HCT116 (cell line): ENCODE measurements at regions of chr20 and their contacts with region 1.

Region 1: GRCh38 chr20:56974499-56975236 is 291.8 kb downstream of the BMP7 start:
- DNase-seq: peak; percentile 47
- ATAC-seq: peak; percentile 90
- H3K4me3 ChIP-seq: peak overlapping the region in 1 of 2 experiments; percentile 16; a peak in 1 of 4 replicates
- H3K27ac ChIP-seq: no peak overlapping the region
- H3K4me1 ChIP-seq: peaks cover 0 to 5% of the 10 kb centered on the region in 2 experiments; a peak in 2 of 4 replicates
- H3K27me3 ChIP-seq: no peaks in the 10 kb centered on the region
- CTCF ChIP-seq: peak; percentile 82 to 89 (median 87)
- POLR2A ChIP-seq: no peak
- RAD21 ChIP-seq: peak; percentile 90

Region 2: DNA sequence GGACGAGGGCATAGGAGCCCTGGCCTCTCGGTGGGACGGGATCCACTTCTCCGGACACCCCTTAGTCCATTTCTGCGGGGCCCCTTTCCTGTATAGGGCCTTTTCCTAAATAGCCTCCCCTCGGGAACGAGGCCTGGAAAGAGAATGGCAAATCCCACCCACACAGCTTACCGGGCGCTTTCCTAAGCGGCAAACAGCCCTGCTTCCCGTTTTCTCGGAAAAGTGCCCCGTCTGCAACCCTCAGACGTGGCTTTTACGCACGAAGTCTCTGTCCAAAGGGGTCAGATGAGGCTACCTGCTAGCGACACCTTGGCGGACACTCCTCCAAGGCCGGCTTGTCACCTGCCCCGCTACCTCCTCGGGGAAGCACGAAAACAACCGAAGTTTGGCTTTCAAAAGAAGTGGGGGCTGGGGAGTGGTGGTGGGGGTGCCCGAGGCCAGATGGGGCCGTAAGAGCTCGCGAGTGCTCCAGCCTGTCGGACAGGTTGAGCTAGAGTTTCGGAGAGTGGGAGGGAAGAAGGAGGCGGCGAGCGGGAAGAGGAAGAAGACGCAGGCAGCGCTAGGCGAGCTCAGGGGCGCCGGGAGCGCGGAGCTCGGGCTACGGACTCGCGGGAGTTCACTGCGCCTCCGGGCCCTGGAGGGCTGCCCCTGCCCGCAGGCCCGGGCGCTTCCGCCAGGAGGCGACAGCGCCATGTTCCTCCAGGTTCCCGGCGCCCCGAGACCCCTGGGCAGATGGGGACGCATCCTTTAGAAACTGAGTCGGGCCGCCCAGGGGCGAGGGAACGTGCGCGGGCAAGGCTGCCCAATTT is 344.8 kb before region 1 on chr20:
- CTCF ChIA-PET with region 1: interaction called, 13 read pairs
- POLR2A ChIA-PET with region 1: no interaction called
- RAD21 ChIA-PET with region 1: interaction called, 4 to 11 read pairs
- intact Hi-C with region 1: loop called (anchors 1 kb)
- DNase-seq: peak; percentile 54
- ATAC-seq: peak; percentile 79
- H3K4me3 ChIP-seq: peak overlapping the region; percentile 61 to 84
- H3K27ac ChIP-seq: peak overlapping the region; percentile 65
- H3K4me1 ChIP-seq: peaks cover 4 to 17% of the 10 kb centered on the region in 2 experiments
- H3K27me3 ChIP-seq: no peaks in the 10 kb centered on the region
- CTCF ChIP-seq: peak; percentile 60 to 88 (median 75)
- POLR2A ChIP-seq: no peak
- RAD21 ChIP-seq: peak; percentile 73

Region 3: DNA sequence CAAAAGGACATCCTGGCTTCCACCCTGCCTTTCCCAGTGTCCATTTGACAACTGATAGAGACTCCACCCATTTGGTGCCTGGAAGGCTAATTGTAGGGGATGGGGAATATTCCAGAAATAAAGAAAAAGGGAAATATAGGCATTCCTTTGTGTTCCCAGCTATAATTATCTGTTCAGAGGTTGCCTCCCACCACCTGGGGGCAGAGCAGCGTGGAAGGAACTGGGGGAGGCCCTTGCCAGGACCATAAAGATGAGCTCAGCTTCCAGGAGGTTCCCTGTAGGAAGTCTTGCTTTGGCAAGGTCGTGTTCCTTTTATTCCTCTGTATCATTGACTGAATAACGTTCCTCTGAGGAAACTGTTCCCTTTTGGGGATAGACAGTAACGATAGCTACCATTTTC is 130.9 kb before region 1 on chr20:
- CTCF ChIA-PET with region 1: interaction called, 11 read pairs
- POLR2A ChIA-PET with region 1: no interaction called
- RAD21 ChIA-PET with region 1: interaction called, 3 to 7 read pairs
- intact Hi-C with region 1: no loop called
- DNase-seq: peak; percentile 3
- ATAC-seq: peak; percentile 84
- H3K4me3 ChIP-seq: no peak overlapping the region
- H3K27ac ChIP-seq: no peak overlapping the region
- H3K4me1 ChIP-seq: peaks cover 0 to 6% of the 10 kb centered on the region in 2 experiments; a peak in 1 of 4 replicates
- H3K27me3 ChIP-seq: peaks cover 2% of the 10 kb centered on the region
- CTCF ChIP-seq: peak; percentile 28 to 52 (median 47); a peak in 4 of 6 replicates
- POLR2A ChIP-seq: no peak
- RAD21 ChIP-seq: peak; percentile 44